ENCODE measurements at regions of chr3 and their contacts with region 1.

Region 1: DNA sequence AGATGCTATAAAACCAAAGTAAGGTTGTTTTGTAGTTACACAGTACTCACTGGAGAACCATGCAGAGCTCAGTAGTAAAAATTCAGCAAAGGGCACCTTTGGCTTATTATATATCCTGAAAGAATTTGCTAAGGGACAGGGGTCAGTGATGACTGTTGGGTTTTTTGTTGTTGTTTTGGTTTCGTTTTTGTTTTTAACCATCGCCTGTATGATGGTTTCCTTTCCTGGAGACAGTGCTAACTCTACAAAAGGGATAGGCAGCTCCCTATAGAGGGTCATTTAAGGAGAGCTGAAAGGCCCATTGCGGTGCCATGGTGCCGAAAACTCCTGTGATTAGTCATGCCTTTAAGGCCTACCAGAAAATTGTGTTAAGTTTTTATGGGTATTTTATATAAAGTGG is 118.2 kb upstream of the GOLIM4 start:
- DNase-seq: no peak
- ATAC-seq: peak; percentile 12
- H3K4me3 ChIP-seq: peak overlapping the region; percentile 13
- H3K4me3 Mint-ChIP-seq: peak overlapping the region in 5 of 10 donors; percentile 6 to 65 (median 14)
- H3K27ac ChIP-seq: no peak overlapping the region
- H3K27ac Mint-ChIP-seq: peak overlapping the region in 1 of 9 donors; percentile 70
- H3K4me1 ChIP-seq: no peaks in the 10 kb centered on the region
- H3K4me1 Mint-ChIP-seq: peaks cover 0 to 11% (median 4%) of the 10 kb centered on the region in 7 donors
- H3K27me3 ChIP-seq: no peaks in the 10 kb centered on the region
- H3K27me3 Mint-ChIP-seq: peaks cover 0 to 6% (median 4%) of the 10 kb centered on the region in 5 donors

Region 2: DNA sequence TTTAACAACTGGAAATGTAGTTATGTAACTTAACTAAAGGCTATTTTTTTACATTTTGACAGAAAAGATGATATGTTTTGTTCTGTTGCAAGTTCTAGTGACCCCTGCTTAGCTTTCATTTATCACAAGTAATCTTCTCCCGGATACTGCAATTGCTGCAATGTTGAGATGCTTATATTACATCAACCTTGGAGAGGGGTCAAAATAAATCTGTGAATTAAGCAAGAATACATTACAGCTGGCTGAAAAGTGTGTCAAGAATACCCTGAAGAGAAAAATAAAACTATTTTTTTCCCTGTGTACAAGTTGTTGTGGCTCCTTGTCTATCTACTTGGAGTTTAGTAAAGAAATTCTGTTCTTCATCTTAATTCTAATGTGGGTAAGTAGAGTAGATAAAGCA is 113.9 kb after region 1 on chr3:
- CTCF ChIA-PET with region 1: no interaction called
- POLR2A ChIA-PET with region 1: no interaction called
- intact Hi-C with region 1: no loop called
- DNase-seq: no peak
- ATAC-seq: no peak
- H3K4me3 ChIP-seq: no peak overlapping the region
- H3K4me3 Mint-ChIP-seq: no peak overlapping the region
- H3K27ac ChIP-seq: no peak overlapping the region
- H3K27ac Mint-ChIP-seq: no peak overlapping the region
- H3K4me1 ChIP-seq: no peaks in the 10 kb centered on the region
- H3K4me1 Mint-ChIP-seq: no peaks in the 10 kb centered on the region
- H3K27me3 ChIP-seq: no peaks in the 10 kb centered on the region
- H3K27me3 Mint-ChIP-seq: no peaks in the 10 kb centered on the region

Region 3: GRCh38 chr3:168467115-168467714 is 253.3 kb after region 1 on chr3:
- CTCF ChIA-PET with region 1: no interaction called
- POLR2A ChIA-PET with region 1: no interaction called
- intact Hi-C with region 1: loop called in 1 of 2 experiments (anchors 2 kb)
- DNase-seq: no peak
- ATAC-seq: peak; percentile 34
- H3K4me3 ChIP-seq: no peak overlapping the region
- H3K4me3 Mint-ChIP-seq: peak overlapping the region in 1 of 10 donors; percentile 6
- H3K27ac ChIP-seq: no peak overlapping the region
- H3K27ac Mint-ChIP-seq: no peak overlapping the region
- H3K4me1 ChIP-seq: no peaks in the 10 kb centered on the region
- H3K4me1 Mint-ChIP-seq: no peaks in the 10 kb centered on the region
- H3K27me3 ChIP-seq: no peaks in the 10 kb centered on the region
- H3K27me3 Mint-ChIP-seq: no peaks in the 10 kb centered on the region

Measured in naive thymus-derived CD4-positive, alpha-beta T cell (primary cell).